ENCODE measurements at regions of chr1 and their contacts with region 1.

Region 1: DNA sequence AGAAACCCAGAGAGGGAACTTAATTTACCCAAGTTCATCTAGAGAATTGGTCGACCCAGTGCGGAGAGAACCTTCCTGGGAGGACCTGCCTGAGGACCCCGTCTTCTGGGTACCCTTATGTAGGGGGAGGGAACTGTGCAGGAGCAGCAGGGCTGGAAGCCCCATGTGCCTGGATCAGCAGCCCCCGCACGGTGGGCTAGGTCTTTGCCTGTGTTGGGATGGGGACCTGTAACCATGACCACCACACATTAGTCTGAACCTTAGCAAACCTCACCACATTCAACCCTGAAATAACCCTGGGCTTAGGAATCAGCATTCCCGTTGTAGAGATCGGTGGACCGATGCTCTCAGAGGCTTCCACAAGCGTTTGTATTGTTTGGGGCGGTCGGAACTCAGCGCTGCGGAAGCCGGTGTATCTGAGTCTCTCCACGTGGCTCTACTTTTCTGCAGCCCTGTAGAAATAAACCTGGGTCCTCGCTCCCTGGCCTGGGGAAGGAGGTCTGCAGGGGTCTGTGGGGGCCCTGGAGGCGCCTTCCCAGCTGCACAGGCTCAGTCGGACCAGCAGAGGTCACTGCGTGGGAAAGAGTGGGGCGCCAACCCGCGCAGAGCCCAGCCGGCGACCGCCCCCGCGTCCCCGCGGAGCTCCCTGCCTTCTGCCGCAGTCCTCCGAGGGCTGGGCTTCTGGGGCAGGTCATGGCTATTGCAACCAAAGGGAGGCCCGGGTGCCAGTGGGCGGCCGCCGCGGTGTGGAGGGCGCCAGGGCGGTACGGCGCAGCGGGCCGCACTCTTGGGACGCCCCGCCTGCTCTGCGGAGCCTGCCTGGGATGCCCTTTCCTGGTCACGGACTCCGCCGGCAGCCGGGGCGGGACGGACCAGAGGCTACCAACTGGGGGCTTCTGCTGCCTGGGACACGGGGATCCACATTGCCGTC is 36.2 kb upstream of the KCNA10 start:
- DNase-seq: peak; percentile 7 to 23
- ATAC-seq: peak; percentile 83 to 94
- H3K4me3 ChIP-seq: peak overlapping the region; percentile 40
- H3K27ac ChIP-seq: peak overlapping the region in 1 of 2 experiments; percentile 63; a peak in 3 of 6 replicates
- H3K4me1 ChIP-seq: no peaks in the 10 kb centered on the region
- CTCF ChIP-seq: peak; percentile 44
- EP300 ChIP-seq: no peak
- POLR2A ChIP-seq: no peak
- RAD21 ChIP-seq: peak in 1 of 2 experiments; percentile 11; a peak in 2 of 5 replicates

Region 2: GRCh38 chr1:110565565-110565964 is 10.4 kb after region 1 on chr1:
- CTCF ChIA-PET with region 1: interaction called, 20 read pairs
- POLR2A ChIA-PET with region 1: no interaction called
- DNase-seq: no peak
- ATAC-seq: no peak
- H3K4me3 ChIP-seq: no peak overlapping the region
- H3K27ac ChIP-seq: no peak overlapping the region
- H3K4me1 ChIP-seq: no peaks in the 10 kb centered on the region
- CTCF ChIP-seq: no peak
- EP300 ChIP-seq: no peak
- POLR2A ChIP-seq: no peak
- RAD21 ChIP-seq: no peak

Region 3: DNA sequence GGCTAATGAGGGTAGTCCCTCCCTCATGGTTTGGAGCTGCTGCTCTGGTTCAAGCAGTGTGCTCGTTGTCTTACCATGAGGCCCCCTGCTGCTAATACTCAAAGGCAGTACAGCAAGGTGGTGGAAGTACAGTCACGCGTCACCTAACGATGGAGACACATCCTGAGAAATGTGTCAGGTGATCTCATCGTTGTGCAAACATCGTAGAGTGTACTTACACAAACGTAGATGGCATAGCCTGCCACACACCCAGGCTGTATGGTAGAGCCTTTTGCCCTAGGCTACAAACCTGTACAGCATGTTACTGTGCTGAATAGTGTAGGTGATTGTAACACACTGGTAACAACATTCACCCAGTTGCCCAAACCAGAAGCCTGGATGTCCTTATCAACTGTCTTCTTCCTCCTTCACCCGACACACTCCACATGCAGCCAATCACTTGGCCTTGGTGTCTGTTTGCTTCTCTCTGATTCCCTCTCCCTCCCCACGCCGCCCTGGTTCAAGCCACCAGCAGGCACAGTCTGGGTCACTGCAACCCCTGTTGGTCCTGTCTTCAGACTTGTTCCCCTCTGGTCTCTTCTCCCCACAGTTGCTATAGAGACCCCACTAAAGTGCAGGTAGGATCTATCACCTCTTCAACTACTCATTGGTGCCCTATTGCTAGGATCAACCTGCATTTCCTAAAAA is 57.1 kb after region 1 on chr1:
- CTCF ChIA-PET with region 1: interaction called, 12 read pairs
- POLR2A ChIA-PET with region 1: no interaction called
- DNase-seq: peak in 1 of 2 experiments; percentile 12
- ATAC-seq: no peak
- H3K4me3 ChIP-seq: no peak overlapping the region
- H3K27ac ChIP-seq: no peak overlapping the region
- H3K4me1 ChIP-seq: peaks cover 12% of the 10 kb centered on the region
- CTCF ChIP-seq: no peak
- EP300 ChIP-seq: no peak
- POLR2A ChIP-seq: no peak
- RAD21 ChIP-seq: no peak

Measured in A549 (cell line).